ENCODE measurements at regions of chr2 and their contacts with region 1.

Region 1: DNA sequence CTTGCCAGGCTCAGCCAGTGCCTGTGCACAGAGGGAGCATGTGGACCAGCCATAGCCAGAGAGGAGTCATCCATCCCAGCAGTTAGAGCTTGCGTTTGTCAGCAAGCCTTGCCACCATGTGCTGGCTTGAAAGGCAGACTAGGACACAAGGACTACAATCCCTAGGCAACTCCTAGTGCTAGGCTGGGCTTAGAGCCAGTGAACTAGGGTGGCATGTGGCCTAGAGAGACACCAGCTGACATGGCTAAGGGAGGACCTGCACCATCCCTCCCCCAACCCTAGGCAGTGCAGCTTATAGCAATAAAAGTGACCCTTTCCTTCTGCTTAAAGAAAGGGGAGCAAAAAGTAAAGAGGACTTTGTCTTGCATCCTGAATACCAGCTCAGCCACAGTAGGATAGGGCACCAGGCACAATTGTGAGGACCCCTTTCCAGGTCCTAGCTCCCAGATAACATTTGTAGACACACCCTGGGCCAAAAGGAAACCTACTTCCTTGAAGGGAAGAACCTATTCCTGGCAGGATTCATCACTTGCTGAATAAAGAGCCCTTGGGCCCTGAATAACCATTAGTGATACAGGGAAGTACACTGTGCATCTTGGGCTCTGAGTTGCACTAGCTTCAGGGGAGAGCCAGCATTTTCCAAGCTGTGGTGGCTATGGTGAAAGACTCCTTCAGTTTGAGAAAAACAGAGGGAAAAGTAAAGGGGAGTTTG is 38.7 kb upstream of the UXS1 start:
- DNase-seq: no peak
- H3K4me3 ChIP-seq: no peak overlapping the region
- H3K4me3 Mint-ChIP-seq: peak overlapping the region in 1 of 7 donors; percentile 15
- H3K27ac ChIP-seq: no peak overlapping the region
- H3K27ac Mint-ChIP-seq: no peak overlapping the region
- H3K4me1 ChIP-seq: no peaks in the 10 kb centered on the region
- H3K4me1 Mint-ChIP-seq: no peaks in the 10 kb centered on the region
- H3K27me3 ChIP-seq: no peaks in the 10 kb centered on the region
- H3K27me3 Mint-ChIP-seq: peaks cover 12 to 17% of the 10 kb centered on the region in 2 donors

Region 2: DNA sequence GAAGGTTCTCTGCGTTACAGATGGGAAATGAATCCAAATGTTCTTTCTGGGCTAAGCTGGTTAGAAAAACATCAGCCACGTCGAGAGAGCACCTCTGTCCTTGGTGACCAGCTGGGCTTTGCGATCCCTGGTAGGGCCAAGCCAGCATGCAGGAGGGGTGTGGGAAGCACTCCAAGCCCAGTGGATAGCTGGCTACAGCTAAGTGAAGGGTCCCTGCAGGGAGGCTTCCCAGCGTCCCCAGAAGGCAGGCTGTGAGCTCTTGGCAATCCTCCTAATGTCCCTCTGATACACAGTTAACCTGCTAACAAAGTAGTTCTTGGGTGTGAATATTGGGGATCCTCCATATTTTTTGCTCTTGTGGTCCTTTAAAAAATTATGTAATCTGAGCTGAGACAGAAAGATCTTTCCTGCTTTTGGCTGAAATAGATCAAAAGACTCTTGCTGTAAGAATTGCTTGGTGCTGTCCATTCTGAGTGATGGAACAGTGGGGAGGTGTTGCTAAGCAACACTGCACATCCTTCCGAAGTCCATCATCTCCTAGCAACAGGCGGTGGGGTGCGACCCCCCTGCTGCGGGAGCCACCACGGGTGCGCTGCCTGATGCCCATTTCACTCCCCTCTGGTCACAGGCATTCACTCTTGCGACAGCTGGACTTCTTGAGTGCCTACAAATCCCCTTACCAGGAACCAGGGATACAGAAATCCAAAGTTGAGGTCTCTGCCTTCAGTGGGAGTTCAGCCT is 49.8 kb after region 1 on chr2:
- CTCF ChIA-PET with region 1: no interaction called
- POLR2A ChIA-PET with region 1: no interaction called
- DNase-seq: no peak
- H3K4me3 ChIP-seq: no peak overlapping the region
- H3K4me3 Mint-ChIP-seq: no peak overlapping the region
- H3K27ac ChIP-seq: no peak overlapping the region
- H3K27ac Mint-ChIP-seq: no peak overlapping the region
- H3K4me1 ChIP-seq: no peaks in the 10 kb centered on the region
- H3K4me1 Mint-ChIP-seq: no peaks in the 10 kb centered on the region
- H3K27me3 ChIP-seq: no peaks in the 10 kb centered on the region
- H3K27me3 Mint-ChIP-seq: peaks cover 7 to 32% of the 10 kb centered on the region in 2 donors

Region 3: GRCh38 chr2:106316915-106317314 is 84.1 kb after region 1 on chr2:
- CTCF ChIA-PET with region 1: no interaction called
- POLR2A ChIA-PET with region 1: interaction called, 10 read pairs
- DNase-seq: no peak
- H3K4me3 ChIP-seq: no peak overlapping the region
- H3K4me3 Mint-ChIP-seq: no peak overlapping the region
- H3K27ac ChIP-seq: no peak overlapping the region
- H3K27ac Mint-ChIP-seq: no peak overlapping the region
- H3K4me1 ChIP-seq: no peaks in the 10 kb centered on the region
- H3K4me1 Mint-ChIP-seq: peaks cover 0 to 6% (median 2%) of the 10 kb centered on the region in 3 donors
- H3K27me3 ChIP-seq: no peaks in the 10 kb centered on the region
- H3K27me3 Mint-ChIP-seq: peaks cover 0 to 3% of the 10 kb centered on the region in 2 donors

Measured in CD8-positive, alpha-beta memory T cell (primary cell).